Activated B cell treated with CpG ODN at 0.5 μM for 24 hours (primary cell): ENCODE measurements at regions of chr4 and their contacts with region 1.

Region 1: GRCh38 chr4:121484633-121485032 is 103.8 kb upstream of the QRFPR start:
- DNase-seq: no peak
- ATAC-seq: peak; percentile 54
- H3K4me3 Mint-ChIP-seq: no peak overlapping the region
- H3K27ac Mint-ChIP-seq: no peak overlapping the region
- H3K4me1 Mint-ChIP-seq: no peaks in the 10 kb centered on the region
- H3K27me3 Mint-ChIP-seq: peaks cover 2% of the 10 kb centered on the region
- CTCF ChIP-seq: no peak

Region 2: GRCh38 chr4:121656269-121656641 is 171.6 kb after region 1 on chr4:
- CTCF ChIA-PET with region 1: no interaction called
- POLR2A ChIA-PET with region 1: no interaction called
- intact Hi-C with region 1: loop called (anchors 5 kb)
- DNase-seq: no peak
- ATAC-seq: no peak
- H3K4me3 Mint-ChIP-seq: no peak overlapping the region
- H3K27ac Mint-ChIP-seq: no peak overlapping the region
- H3K4me1 Mint-ChIP-seq: peaks cover 10% of the 10 kb centered on the region
- H3K27me3 Mint-ChIP-seq: no peaks in the 10 kb centered on the region
- CTCF ChIP-seq: no peak